Mammary epithelial cell (primary cell): ENCODE measurements at regions of chr1 and their contacts with region 1.

Region 1: DNA sequence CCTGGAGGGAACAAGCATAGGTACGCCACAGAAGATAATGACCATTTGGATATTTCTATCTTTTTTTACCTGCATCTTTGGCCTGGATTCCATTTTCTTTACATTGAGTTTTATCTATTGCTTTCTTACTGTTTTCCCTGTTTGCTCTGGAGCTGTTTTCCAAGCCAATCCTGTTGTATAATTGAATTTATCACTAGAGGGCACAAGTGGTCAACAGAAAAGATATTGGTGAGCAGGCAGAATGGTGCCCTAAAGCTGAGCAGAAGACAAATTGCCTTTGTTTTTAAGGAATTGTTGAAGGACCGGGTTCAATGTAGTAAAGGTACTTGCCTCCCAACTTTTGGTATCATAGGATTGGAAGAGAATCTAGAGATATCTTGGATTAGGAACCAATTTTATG is 152.8 kb downstream of the PPP1R12B start:
- DNase-seq: peak; percentile 25
- H3K4me3 ChIP-seq: no peak overlapping the region
- H3K27ac ChIP-seq: no peak overlapping the region
- H3K4me1 ChIP-seq: peaks cover 8% of the 10 kb centered on the region
- H3K27me3 ChIP-seq: no peaks in the 10 kb centered on the region
- CTCF ChIP-seq: peak; percentile 29 to 49

Region 2: GRCh38 chr1:202221911-202222909 is 279.1 kb before region 1 on chr1:
- CTCF ChIA-PET with region 1: no interaction called
- dilution Hi-C with region 1: no loop called
- in situ Hi-C with region 1: no loop called
- intact Hi-C with region 1: no loop called
- DNase-seq: peak; percentile 78
- H3K4me3 ChIP-seq: no peak overlapping the region
- H3K27ac ChIP-seq: no peak overlapping the region
- H3K4me1 ChIP-seq: peaks cover 19% of the 10 kb centered on the region
- H3K27me3 ChIP-seq: no peaks in the 10 kb centered on the region
- CTCF ChIP-seq: no peak

Region 3: DNA sequence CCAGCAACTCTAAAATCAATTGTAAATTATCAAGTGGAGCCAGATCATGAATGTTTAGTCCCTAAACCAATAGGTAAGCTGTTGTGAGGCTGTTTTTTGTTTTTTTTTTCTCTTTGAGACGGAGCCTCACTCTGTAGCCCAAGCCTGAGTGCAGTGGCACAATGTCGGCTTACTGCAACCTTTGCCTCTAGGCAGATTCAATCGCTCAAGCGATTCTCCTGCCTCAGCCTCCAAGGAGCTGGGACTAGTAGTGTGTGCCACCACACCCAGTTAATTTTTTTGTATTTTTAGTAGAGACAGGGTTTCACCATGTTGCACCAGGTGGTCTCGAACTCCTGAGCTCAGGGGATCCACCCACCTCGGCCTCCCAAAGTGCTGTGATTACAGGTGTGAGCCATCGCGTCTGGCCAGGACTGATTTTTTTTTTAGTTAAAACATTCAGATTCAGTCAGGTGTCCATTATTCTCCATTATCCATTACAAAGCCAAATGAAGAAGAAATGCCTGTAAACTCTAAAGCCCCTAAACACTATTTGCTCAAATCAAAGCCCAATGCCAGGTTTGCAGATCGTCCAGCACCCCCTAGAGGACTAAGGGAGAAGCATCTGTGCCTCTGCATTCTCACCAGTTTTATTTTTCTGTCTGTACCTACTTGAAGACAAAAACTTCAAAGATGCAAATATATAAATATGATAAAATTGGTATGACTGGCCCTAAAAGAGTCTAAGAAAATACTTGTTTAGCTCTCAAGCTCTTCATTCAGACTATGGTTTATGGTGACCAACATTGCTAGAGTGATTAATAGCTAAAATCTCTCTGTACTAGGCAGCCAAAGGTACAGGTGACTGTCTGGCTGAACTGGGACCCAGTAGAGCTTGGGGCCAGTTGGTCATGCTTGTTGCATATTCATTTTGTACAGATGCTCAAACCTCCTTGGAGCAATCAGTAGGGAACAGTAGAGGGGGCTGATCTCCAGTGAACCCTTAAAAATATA is 70.4 kb after region 1 on chr1:
- CTCF ChIA-PET with region 1: interaction called, 3 read pairs
- dilution Hi-C with region 1: no loop called
- in situ Hi-C with region 1: no loop called
- intact Hi-C with region 1: loop called (anchors 1 kb)
- DNase-seq: no peak
- H3K4me3 ChIP-seq: no peak overlapping the region
- H3K27ac ChIP-seq: no peak overlapping the region
- H3K4me1 ChIP-seq: peaks cover 36% of the 10 kb centered on the region
- H3K27me3 ChIP-seq: no peaks in the 10 kb centered on the region
- CTCF ChIP-seq: peak; percentile 86 to 95

Region 4: DNA sequence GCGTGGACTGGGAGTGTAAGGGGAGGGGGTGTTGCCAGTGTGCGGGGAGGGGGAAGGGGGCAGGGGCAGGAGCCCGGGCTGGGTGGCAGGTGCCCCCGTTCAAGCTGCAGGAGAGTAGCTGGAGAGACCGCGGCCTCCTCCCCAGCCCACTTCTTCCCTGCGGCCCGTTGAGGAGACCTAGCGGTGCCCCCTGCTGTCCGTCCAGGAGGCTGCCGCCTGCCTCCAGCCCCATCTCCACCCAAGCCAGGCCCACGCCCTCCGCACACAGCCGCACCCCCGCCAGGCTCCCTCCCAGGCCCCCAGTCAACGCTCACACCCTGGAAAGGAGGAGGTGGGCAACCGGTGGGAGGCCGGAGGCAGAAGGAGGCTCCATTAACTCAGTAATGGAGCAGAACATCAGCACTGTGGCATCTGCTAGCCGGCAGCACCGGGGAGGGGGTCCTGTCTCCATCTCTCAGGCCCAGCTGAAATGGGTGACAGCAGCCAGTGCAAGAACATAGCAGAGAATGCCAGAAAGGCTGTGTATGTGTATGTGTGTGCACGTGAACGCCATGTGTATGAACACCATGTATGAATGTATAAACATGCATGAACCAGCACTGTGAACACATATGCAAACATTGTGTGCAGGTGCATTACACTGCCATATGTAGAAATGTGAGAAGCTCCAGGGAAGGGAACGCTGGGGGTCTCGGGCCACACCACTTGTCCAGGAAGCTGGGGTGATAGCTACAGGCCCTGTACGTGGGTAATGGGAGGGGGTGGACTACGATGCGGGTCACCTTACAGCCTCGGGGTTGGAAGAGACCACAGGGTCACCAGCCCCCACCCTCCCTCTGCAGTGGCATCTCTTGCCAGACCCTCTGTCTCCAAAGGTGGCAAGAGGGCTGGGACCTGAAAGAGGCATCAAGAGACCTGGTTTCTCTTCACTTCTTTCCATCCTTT is 124.4 kb after region 1 on chr1:
- CTCF ChIA-PET with region 1: no interaction called
- dilution Hi-C with region 1: no loop called
- in situ Hi-C with region 1: no loop called
- intact Hi-C with region 1: loop called (anchors 1 kb)
- DNase-seq: peak; percentile 17
- H3K4me3 ChIP-seq: no peak overlapping the region
- H3K27ac ChIP-seq: no peak overlapping the region
- H3K4me1 ChIP-seq: no peaks in the 10 kb centered on the region
- H3K27me3 ChIP-seq: no peaks in the 10 kb centered on the region
- CTCF ChIP-seq: peak; percentile 41 to 69

Region 5: GRCh38 chr1:202661123-202661845 is 160.0 kb after region 1 on chr1:
- CTCF ChIA-PET with region 1: interaction called, 3 read pairs
- dilution Hi-C with region 1: no loop called
- in situ Hi-C with region 1: no loop called
- intact Hi-C with region 1: loop called (anchors 1 kb)
- DNase-seq: no peak
- H3K4me3 ChIP-seq: no peak overlapping the region
- H3K27ac ChIP-seq: no peak overlapping the region
- H3K4me1 ChIP-seq: no peaks in the 10 kb centered on the region
- H3K27me3 ChIP-seq: peaks cover 2% of the 10 kb centered on the region
- CTCF ChIP-seq: peak; percentile 33 to 56